Activated naive CD4-positive, alpha-beta T cell treated with anti-CD3 and anti-CD28 coated beads for 36 hours (primary cell): ENCODE measurements at regions of chr6 and their contacts with region 1.

Region 1: GRCh38 chr6:116969211-116969863 is 92.3 kb downstream of the RFX6 start:
- DNase-seq: peak; percentile 33
- H3K4me3 Mint-ChIP-seq: no peak overlapping the region
- H3K27ac Mint-ChIP-seq: no peak overlapping the region
- H3K4me1 Mint-ChIP-seq: no peaks in the 10 kb centered on the region
- H3K27me3 Mint-ChIP-seq: peaks cover 15% of the 10 kb centered on the region

Region 2: DNA sequence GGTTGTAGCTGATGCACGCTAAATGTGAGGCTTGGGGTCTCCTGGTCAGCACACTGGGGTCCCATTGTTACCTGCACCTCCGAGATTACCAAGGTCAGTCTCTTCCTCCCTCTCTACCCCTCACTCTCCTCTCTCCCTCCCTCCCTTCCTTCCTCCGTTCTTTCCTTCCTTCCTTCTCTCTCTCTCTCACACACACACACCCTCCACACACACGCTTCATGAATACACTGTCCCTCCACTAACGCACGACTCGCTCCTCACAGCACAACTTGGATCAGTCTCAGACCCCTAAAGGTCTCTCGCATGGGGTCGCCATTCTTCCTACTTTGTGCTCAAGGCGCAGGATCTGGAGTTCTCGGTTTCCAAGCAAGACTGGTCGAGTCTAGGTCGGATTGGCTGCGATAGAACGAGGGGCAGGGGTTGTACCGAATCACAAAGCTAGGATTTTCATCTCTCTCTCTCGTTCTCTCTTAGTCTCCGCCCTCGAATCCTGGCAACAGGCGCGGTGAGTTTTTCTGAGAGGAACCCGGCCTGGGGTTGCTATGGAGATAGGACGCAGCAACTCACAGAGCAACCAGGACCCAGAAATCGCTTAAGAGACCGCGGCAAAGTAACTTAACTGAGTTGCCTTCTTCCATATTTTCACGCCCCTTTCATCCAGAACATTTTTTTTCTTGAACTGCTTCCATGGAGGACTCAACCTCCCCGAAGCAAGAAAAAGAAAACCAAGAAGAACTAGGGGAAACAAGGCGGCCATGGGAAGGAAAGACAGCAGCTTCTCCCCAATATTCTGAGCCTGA is 353.2 kb before region 1 on chr6 and contains the start of gene RSPH4A:
- CTCF ChIA-PET with region 1: no interaction called
- intact Hi-C with region 1: loop called (anchors 10 kb)
- DNase-seq: peak; percentile 85
- H3K4me3 Mint-ChIP-seq: peak within 1 kb of the TSS; percentile 82
- H3K27ac Mint-ChIP-seq: no peak within 1 kb of the TSS
- H3K4me1 Mint-ChIP-seq: peaks cover 12% of the 10 kb centered on the region
- H3K27me3 Mint-ChIP-seq: peaks cover 11% of the 10 kb centered on the region
- total RNA-seq, gene RSPH4A: not detected

Region 3: GRCh38 chr6:116779573-116780164 is 189.7 kb before region 1 on chr6:
- CTCF ChIA-PET with region 1: no interaction called
- intact Hi-C with region 1: loop called (anchors 1 kb)
- DNase-seq: no peak
- H3K4me3 Mint-ChIP-seq: no peak overlapping the region
- H3K27ac Mint-ChIP-seq: no peak overlapping the region
- H3K4me1 Mint-ChIP-seq: no peaks in the 10 kb centered on the region
- H3K27me3 Mint-ChIP-seq: peaks cover 9% of the 10 kb centered on the region

Region 4: DNA sequence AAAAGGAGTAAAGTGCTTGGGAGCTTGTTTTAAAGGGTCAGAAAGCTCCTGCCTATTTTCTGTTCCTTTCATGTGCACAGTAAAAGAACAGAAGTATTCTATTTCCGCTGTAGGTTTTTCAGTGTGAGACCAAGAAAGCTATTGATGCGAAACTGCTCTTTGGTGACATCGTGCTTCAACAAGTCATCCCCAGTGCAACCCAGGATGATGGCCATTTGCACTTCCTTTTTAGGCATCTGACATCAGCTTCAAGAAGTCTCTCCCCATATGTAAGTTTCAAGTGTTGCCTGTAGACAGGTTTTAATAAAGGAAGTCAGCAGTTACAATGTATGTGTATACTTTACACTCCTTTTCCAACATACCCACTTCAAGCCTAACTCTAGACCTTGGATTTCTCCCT is 39.3 kb after region 1 on chr6:
- CTCF ChIA-PET with region 1: no interaction called
- intact Hi-C with region 1: no loop called
- DNase-seq: no peak
- H3K4me3 Mint-ChIP-seq: no peak overlapping the region
- H3K27ac Mint-ChIP-seq: no peak overlapping the region
- H3K4me1 Mint-ChIP-seq: no peaks in the 10 kb centered on the region
- H3K27me3 Mint-ChIP-seq: no peaks in the 10 kb centered on the region

Region 5: GRCh38 chr6:117265410-117266256 is 296.3 kb after region 1 on chr6 and contains the start of gene VGLL2:
- CTCF ChIA-PET with region 1: interaction called, 3 read pairs
- intact Hi-C with region 1: loop called (anchors 5 kb)
- DNase-seq: no peak
- H3K4me3 Mint-ChIP-seq: peak within 1 kb of the TSS; percentile 51
- H3K27ac Mint-ChIP-seq: no peak within 1 kb of the TSS
- H3K4me1 Mint-ChIP-seq: peaks cover 8% of the 10 kb centered on the region
- H3K27me3 Mint-ChIP-seq: peaks cover 85% of the 10 kb centered on the region
- total RNA-seq, gene VGLL2: not detected

Region 6: GRCh38 chr6:117346142-117346930 is 377.0 kb after region 1 on chr6:
- CTCF ChIA-PET with region 1: no interaction called
- intact Hi-C with region 1: loop called (anchors 1 kb)
- DNase-seq: no peak
- H3K4me3 Mint-ChIP-seq: no peak overlapping the region
- H3K27ac Mint-ChIP-seq: no peak overlapping the region
- H3K4me1 Mint-ChIP-seq: no peaks in the 10 kb centered on the region
- H3K27me3 Mint-ChIP-seq: peaks cover 3% of the 10 kb centered on the region

Region 7: GRCh38 chr6:118207947-118208346 is 1238.6 kb after region 1 on chr6:
- CTCF ChIA-PET with region 1: no interaction called
- intact Hi-C with region 1: no loop called
- DNase-seq: no peak
- H3K4me3 Mint-ChIP-seq: no peak overlapping the region
- H3K27ac Mint-ChIP-seq: no peak overlapping the region
- H3K4me1 Mint-ChIP-seq: no peaks in the 10 kb centered on the region
- H3K27me3 Mint-ChIP-seq: peaks cover 3% of the 10 kb centered on the region